ENCODE measurements at regions of chr2 and their contacts with region 1.

Region 1: DNA sequence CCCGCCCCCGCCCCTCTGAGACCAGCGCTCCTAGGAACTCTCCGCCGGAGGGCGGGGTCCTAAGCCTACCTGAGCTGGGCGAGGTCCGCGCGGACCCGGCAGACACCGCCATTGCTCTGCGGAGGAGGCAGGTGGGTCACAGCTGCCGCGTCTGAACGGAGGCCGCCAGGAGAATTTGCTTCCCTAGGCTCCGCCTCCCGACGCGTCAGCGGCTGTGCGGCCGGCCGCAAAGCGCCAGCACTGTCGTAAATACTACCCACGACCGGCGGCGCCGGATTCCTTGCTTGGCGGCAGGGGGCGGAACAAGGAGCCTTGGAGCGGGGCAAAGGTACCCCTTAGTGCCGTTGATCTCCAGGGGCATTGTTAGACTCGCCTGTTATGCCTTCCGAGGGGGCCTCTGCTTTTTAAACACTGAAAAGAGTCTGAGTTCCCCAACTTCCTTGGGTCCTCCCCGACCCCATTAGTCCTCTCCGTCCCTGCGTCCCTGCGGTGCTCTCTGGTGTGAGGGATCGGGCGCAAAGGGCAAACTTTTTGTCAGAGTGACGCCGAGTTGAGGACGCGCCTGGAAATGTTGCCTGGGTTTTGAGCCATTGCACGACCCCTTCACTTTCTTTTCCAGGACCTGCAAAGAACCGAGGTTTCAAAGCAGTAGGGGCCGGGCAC is at the start of gene GGCX:
- DNase-seq: peak; percentile 90 to 98 (median 96)

Region 2: DNA sequence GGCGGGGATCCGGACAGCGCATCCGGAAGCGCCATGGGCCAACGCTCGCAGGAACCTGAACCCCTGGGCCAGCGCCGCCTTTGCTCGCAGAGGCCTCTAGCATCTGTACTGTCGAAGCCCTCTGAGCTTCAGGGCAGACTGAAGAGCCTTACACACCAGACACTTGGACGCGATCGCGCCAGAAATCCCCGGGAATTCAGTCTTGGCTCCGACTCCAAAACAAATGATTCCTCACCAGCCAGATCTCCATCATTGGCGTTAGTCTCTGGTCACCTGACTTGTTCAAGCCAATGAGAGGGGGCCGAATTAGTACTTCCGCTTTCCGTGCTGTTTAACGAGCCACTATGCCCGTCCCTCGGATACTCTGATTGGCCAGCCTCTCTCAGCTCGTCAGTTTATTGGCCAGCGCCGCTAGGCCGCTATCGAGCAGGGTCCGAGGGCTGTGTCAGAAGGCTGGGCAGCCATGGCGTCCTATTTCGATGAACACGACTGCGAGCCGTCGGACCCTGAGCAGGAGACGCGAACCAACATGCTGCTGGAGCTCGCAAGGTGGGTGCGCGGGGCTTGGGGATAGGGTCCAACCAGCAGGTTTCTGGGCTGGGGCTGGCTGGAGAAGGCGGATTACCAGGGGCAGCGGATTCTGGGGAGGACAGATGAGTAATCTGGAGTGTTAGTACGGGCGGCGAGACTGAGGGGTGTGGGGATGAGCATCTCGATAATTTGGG is 34.0 kb after region 1 on chr2 and contains the start of gene RNF181:
- intact Hi-C with region 1: loop called (anchors 5 kb)
- DNase-seq: peak; percentile 94 to 100 (median 99)

Region 3: GRCh38 chr2:85628658-85629057 is 67.2 kb after region 1 on chr2:
- intact Hi-C with region 1: no loop called
- DNase-seq: no peak

Measured in head of caudate nucleus (tissue), 42 donors.